Caco-2 (cell line): ENCODE measurements at regions of chr5 and their contacts with region 1.

Region 1: DNA sequence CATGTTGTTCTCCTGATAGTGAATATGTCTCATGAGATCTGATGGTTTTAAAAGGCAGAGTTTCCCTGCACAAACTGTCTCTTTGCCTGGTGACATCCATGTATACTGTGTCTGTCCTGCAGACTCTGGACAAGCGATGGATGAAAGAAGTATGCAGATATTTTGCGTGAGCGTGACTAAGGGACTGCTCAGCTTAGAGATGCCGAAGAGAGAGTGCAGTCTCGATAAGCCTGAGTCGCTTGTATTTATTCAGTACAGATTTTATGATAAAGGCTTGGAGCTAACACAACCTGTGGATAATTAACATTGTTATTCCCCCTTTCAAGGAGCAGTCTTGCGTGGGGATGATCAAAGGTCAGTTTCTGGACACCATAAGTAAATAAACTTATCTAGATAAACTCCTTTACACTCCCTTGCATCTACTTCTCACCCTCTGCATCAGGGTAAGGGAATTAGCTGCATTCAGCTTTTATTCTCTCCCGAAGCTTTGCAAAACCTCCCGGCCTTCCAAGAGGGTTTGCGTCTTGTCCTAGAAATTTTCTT is 357.7 kb upstream of the ST8SIA4 start:
- DNase-seq: peak; percentile 63 to 78
- H3K4me3 ChIP-seq: no peak overlapping the region
- H3K4me3 Mint-ChIP-seq: peak overlapping the region; percentile 68
- H3K27ac Mint-ChIP-seq: peak overlapping the region; percentile 83
- H3K4me1 ChIP-seq: peaks cover 25% of the 10 kb centered on the region
- H3K4me1 Mint-ChIP-seq: peaks cover 21% of the 10 kb centered on the region
- H3K27me3 ChIP-seq: no peaks in the 10 kb centered on the region
- H3K27me3 Mint-ChIP-seq: no peaks in the 10 kb centered on the region
- CTCF ChIP-seq: no peak

Region 2: DNA sequence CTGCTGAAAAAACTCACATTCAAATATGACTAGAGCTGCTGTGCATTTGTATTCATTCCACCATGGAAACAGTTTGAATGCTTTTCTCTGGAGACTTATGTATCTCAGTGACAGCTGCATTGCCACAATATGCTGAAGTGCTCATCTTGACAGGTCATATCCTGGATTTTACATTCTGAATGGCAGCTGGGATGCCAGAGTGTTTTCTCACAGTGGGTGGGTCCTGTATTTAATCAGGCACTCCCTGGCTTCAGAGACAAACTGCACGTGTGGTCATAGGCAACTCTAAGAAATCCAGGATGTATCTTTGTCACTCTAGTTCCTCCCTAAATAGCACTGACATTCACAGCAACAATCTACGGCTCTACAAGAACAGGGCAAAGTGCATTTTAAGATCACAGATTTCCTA is 433.3 kb before region 1 on chr5:
- CTCF ChIA-PET with region 1: no interaction called
- POLR2A ChIA-PET with region 1: no interaction called
- intact Hi-C with region 1: loop called (anchors 10 kb)
- DNase-seq: peak; percentile 25 to 36
- H3K4me3 ChIP-seq: no peak overlapping the region
- H3K4me3 Mint-ChIP-seq: no peak overlapping the region
- H3K27ac Mint-ChIP-seq: no peak overlapping the region
- H3K4me1 ChIP-seq: peaks cover 23% of the 10 kb centered on the region
- H3K4me1 Mint-ChIP-seq: no peaks in the 10 kb centered on the region
- H3K27me3 ChIP-seq: no peaks in the 10 kb centered on the region
- H3K27me3 Mint-ChIP-seq: no peaks in the 10 kb centered on the region
- CTCF ChIP-seq: no peak

Region 3: DNA sequence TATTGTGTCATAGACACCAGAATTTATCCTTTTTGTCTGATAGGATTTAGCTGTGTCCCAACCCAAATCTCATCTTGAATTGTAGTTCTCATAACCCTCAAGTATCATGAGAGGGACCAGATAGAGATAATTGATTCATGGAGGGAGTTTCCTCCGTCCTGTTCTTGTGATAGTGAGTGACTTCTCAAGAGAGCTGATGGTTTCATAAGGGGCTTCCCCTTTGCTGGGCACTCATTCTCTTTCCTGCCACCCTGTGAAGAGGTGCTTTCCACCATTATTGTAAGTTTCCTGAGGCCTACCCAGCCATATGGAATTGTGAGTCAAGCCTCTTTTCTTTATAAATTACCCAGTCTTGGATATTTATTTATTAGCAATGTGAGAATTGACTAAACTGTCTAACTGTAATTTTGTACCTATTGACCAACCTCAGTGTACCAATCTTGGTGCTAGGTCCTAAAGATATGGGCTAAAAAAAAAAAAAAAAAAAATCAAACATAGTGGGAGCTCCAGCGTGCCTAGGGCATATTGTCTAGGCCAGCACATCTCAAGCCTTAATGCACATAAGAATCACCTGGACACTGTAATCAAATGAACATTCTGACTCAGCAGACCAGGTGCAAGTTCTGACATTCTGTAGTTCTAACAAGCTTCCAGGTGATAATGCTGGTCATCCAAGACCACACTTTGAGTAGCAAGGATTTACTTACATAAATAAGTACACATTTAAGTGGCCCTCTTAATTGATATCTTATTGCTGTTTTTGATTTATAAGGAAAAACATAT is 388.2 kb before region 1 on chr5:
- CTCF ChIA-PET with region 1: no interaction called
- POLR2A ChIA-PET with region 1: no interaction called
- intact Hi-C with region 1: no loop called
- DNase-seq: no peak
- H3K4me3 ChIP-seq: no peak overlapping the region
- H3K4me3 Mint-ChIP-seq: no peak overlapping the region
- H3K27ac Mint-ChIP-seq: no peak overlapping the region
- H3K4me1 ChIP-seq: no peaks in the 10 kb centered on the region; the same call in 1 of the 2 replicates
- H3K4me1 Mint-ChIP-seq: peaks cover 16% of the 10 kb centered on the region
- H3K27me3 ChIP-seq: no peaks in the 10 kb centered on the region
- H3K27me3 Mint-ChIP-seq: no peaks in the 10 kb centered on the region
- CTCF ChIP-seq: no peak

Region 4: GRCh38 chr5:101103874-101104273 is 156.9 kb before region 1 on chr5:
- CTCF ChIA-PET with region 1: no interaction called
- POLR2A ChIA-PET with region 1: no interaction called
- intact Hi-C with region 1: loop called (anchors 2 kb)
- DNase-seq: peak in 1 of 2 experiments; percentile 55
- H3K4me3 ChIP-seq: no peak overlapping the region
- H3K4me3 Mint-ChIP-seq: no peak overlapping the region
- H3K27ac Mint-ChIP-seq: no peak overlapping the region
- H3K4me1 ChIP-seq: peaks cover 19% of the 10 kb centered on the region
- H3K4me1 Mint-ChIP-seq: peaks cover 15% of the 10 kb centered on the region
- H3K27me3 ChIP-seq: no peaks in the 10 kb centered on the region
- H3K27me3 Mint-ChIP-seq: no peaks in the 10 kb centered on the region
- CTCF ChIP-seq: no peak

Region 5: DNA sequence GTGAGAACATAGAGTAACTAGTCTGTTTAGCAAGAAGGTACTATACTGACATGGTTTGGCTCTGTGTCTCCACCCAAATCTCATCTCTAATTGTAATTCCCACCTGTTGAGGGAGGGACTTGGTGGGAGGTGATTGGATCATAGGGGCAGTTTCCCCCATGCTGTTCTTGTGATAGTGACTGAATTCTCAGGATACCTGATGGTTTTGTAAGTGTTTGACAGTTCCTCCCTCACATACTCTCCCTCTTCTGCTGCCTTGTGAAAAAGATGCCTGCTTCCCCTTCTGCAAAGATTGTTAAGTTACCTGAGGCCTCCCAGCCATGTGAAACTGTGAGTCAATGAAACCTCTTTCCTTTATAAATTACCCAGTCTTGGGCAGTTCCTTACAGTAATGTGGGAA is 117.3 kb before region 1 on chr5:
- CTCF ChIA-PET with region 1: no interaction called
- POLR2A ChIA-PET with region 1: interaction called, 12 read pairs
- intact Hi-C with region 1: no loop called
- DNase-seq: no peak
- H3K4me3 ChIP-seq: no peak overlapping the region
- H3K4me3 Mint-ChIP-seq: no peak overlapping the region
- H3K27ac Mint-ChIP-seq: no peak overlapping the region
- H3K4me1 ChIP-seq: no peaks in the 10 kb centered on the region; the same call in 1 of the 2 replicates
- H3K4me1 Mint-ChIP-seq: no peaks in the 10 kb centered on the region
- H3K27me3 ChIP-seq: no peaks in the 10 kb centered on the region
- H3K27me3 Mint-ChIP-seq: no peaks in the 10 kb centered on the region
- CTCF ChIP-seq: no peak